CD4-positive, alpha-beta memory T cell (primary cell): ENCODE measurements at regions of chr2 and their contacts with region 1.

Region 1: DNA sequence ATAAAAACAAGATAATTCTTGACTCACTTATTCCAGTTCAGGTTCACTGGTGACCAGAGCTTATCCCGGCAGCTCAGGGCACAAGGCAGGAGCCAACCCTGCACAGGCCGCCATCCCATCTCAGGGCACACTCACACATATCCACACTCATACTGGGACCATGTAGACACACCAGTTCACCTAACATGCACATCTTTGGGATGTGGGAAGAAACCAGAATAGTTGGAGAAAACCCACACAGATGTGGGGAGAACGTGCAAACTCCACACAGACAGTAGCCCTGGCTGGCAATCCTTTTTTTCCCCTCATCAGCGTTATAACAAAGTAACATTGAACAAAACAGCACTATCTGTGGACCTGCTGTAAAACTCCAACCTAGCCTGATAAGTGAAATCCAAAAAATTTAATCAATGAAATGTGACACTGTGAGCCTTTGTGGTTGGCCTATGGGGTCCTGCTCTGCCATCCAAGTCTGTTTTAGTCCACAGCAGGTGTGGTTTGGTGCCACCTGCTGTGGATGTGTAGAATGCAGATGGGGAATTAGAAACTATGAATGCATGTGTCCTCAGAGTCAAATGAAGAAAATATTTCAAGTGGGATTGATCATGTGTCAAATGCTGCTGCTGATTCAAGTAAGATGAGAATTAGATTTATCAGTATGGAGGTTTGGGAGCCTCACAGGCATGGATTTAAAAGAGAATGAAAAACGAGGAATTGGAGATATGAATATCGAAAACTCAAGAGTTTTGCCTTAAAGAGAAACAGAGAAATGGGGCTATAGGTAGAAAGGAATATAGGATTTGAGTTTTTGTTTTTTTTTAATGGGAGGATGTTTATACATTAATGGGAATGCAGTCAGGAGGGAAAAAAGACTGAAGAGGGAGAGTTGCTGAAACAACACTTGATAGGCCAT is 47.0 kb downstream of the UGP2 start:
- DNase-seq: peak in 4 of 5 donors; percentile 27 to 40 (median 33)
- H3K4me3 ChIP-seq: no peak overlapping the region
- H3K4me3 Mint-ChIP-seq: no peak overlapping the region
- H3K27ac ChIP-seq: no peak overlapping the region
- H3K27ac Mint-ChIP-seq: peak overlapping the region in 6 of 7 donors; percentile 5 to 82 (median 41)
- H3K4me1 ChIP-seq: no peaks in the 10 kb centered on the region
- H3K4me1 Mint-ChIP-seq: peaks cover 0 to 10% (median 1%) of the 10 kb centered on the region in 4 donors
- H3K27me3 ChIP-seq: no peaks in the 10 kb centered on the region
- H3K27me3 Mint-ChIP-seq: no peaks in the 10 kb centered on the region

Region 2: GRCh38 chr2:63596401-63596883 is 292.3 kb before region 1 on chr2:
- CTCF ChIA-PET with region 1: no interaction called
- POLR2A ChIA-PET with region 1: no interaction called
- intact Hi-C with region 1: no loop called
- DNase-seq: no peak
- H3K4me3 ChIP-seq: no peak overlapping the region
- H3K4me3 Mint-ChIP-seq: no peak overlapping the region
- H3K27ac ChIP-seq: no peak overlapping the region
- H3K27ac Mint-ChIP-seq: peak overlapping the region in 1 of 7 donors; percentile 42
- H3K4me1 ChIP-seq: peaks cover 2% of the 10 kb centered on the region
- H3K4me1 Mint-ChIP-seq: peaks cover 10 to 24% (median 18%) of the 10 kb centered on the region in 4 donors
- H3K27me3 ChIP-seq: no peaks in the 10 kb centered on the region
- H3K27me3 Mint-ChIP-seq: no peaks in the 10 kb centered on the region

Region 3: DNA sequence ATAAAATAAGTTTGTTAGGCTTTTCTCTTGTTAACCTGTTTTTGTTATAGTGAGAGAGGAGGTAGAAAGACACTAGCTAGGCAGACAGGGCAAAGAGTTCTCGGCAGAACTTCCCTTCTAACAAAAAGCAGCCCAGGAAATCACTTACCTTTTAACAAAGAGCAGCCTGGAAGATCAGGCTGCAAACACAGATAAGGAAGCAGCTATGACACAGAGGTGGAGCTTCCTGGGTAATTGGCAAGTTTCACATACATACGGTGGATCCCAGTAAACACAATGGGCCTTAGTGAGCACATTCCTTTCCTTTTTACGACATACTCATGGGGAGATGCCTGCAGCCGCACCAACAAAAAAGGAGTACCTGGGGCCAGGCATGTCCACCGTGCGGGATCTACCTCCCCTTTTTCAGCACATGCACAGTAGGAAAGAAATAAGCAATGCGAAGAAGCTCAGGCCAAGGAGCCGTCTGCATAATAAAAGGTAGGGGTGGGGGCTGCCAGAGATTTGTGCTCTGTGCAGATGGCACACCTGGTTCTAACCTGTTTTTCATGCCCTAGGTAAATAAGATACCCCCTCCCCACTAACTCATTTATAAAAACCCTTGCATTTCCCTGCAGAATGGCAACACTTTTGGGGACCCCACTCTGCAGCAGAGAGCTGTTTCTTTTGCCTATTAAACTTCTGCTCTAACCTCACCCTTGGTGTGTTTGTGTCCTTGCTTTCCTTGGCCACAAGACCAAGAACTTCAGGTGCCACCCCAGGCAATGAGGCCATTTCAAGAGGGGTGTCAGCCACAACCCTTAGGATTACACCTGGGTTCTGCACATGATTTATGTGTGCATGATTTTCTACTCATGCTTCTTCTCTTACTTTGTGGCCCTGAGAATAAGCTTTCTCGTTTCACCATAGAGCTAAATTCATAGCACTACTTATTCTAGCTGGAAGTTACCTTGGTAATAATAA is 273.5 kb before region 1 on chr2:
- CTCF ChIA-PET with region 1: no interaction called
- POLR2A ChIA-PET with region 1: no interaction called
- intact Hi-C with region 1: no loop called
- DNase-seq: no peak
- H3K4me3 ChIP-seq: no peak overlapping the region
- H3K4me3 Mint-ChIP-seq: no peak overlapping the region
- H3K27ac ChIP-seq: no peak overlapping the region
- H3K27ac Mint-ChIP-seq: no peak overlapping the region
- H3K4me1 ChIP-seq: no peaks in the 10 kb centered on the region
- H3K4me1 Mint-ChIP-seq: no peaks in the 10 kb centered on the region
- H3K27me3 ChIP-seq: no peaks in the 10 kb centered on the region
- H3K27me3 Mint-ChIP-seq: peaks cover 6 to 10% of the 10 kb centered on the region in 2 donors

Region 4: DNA sequence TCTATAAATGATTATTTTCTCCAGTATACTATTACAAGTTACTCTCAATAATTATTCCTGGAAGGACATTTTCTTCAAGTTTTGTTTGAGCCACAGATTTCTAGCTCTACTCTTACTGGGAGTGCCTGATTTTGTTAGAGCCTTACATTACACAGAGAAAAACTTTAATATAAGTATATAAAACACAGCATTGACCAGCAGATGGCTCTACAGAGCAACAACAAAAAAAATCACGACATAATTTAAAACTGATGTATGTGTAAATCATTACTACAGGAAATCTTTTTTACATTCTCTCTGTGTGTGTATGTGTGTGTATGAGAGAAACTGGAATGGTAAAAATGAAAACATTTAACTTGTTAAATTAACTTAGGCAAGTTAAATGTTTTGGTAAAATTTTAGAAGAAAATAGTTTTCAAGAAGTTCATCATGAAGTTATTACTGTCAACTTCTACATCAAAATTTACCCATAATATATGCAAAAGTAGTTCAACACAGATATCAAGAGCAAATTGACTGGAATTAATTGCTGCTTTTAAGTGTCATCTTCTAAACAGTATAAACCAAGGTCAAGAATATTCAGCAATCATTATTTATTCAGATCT is 196.6 kb before region 1 on chr2:
- CTCF ChIA-PET with region 1: interaction called, 4 read pairs
- POLR2A ChIA-PET with region 1: no interaction called
- intact Hi-C with region 1: loop called (anchors 1 kb)
- DNase-seq: peak in 4 of 5 donors; percentile 38 to 54 (median 46)
- H3K4me3 ChIP-seq: no peak overlapping the region
- H3K4me3 Mint-ChIP-seq: no peak overlapping the region
- H3K27ac ChIP-seq: no peak overlapping the region
- H3K27ac Mint-ChIP-seq: no peak overlapping the region
- H3K4me1 ChIP-seq: no peaks in the 10 kb centered on the region
- H3K4me1 Mint-ChIP-seq: peaks cover 0 to 1% (median 0%) of the 10 kb centered on the region in 4 donors
- H3K27me3 ChIP-seq: no peaks in the 10 kb centered on the region
- H3K27me3 Mint-ChIP-seq: no peaks in the 10 kb centered on the region

Region 5: DNA sequence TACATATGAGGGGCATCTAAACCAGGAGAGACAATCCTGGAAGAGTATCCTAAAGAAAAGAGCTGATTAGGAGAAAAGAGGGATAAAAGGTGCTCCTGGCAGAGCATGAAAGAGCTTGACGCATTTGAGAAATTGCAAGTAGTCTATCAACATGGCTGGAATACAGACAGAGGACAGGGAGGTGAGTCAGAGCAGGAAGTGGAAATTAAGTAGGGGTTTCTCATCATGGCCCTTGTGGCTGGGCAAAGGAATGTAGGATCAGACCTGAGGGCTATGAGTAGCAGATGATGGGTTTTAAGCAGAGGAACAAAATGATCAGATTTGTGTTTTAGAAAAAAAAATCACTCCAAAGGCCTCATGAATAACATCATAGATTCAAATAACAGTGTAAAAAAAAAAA is 96.2 kb before region 1 on chr2:
- CTCF ChIA-PET with region 1: no interaction called
- POLR2A ChIA-PET with region 1: no interaction called
- intact Hi-C with region 1: no loop called
- DNase-seq: no peak
- H3K4me3 ChIP-seq: no peak overlapping the region
- H3K4me3 Mint-ChIP-seq: no peak overlapping the region
- H3K27ac ChIP-seq: no peak overlapping the region
- H3K27ac Mint-ChIP-seq: no peak overlapping the region
- H3K4me1 ChIP-seq: no peaks in the 10 kb centered on the region
- H3K4me1 Mint-ChIP-seq: no peaks in the 10 kb centered on the region
- H3K27me3 ChIP-seq: no peaks in the 10 kb centered on the region
- H3K27me3 Mint-ChIP-seq: no peaks in the 10 kb centered on the region

Region 6: DNA sequence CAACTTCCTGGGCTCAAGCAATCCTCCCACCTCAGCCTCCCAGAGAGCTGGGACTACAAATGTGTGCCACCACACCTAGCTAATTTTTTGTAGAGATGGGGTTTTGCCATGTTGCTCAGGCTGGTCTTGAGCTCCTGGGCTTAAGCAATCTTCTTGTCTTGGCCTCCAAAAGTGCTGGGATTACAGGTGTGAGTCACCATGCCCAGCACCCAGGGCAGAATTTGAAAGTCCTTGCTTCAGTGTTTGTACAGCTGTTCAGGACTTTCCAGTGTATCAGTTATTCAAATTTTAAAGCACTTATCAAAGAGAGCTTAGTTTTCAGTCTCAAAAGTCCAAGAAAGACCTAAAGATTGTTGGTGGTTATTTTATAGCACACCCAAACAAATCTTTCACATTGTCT is 174.1 kb after region 1 on chr2:
- CTCF ChIA-PET with region 1: no interaction called
- POLR2A ChIA-PET with region 1: no interaction called
- intact Hi-C with region 1: no loop called
- DNase-seq: no peak
- H3K4me3 ChIP-seq: no peak overlapping the region
- H3K4me3 Mint-ChIP-seq: no peak overlapping the region
- H3K27ac ChIP-seq: no peak overlapping the region
- H3K27ac Mint-ChIP-seq: peak overlapping the region in 6 of 7 donors; percentile 1 to 88 (median 64)
- H3K4me1 ChIP-seq: peaks cover 19% of the 10 kb centered on the region
- H3K4me1 Mint-ChIP-seq: peaks cover 14 to 30% (median 19%) of the 10 kb centered on the region in 4 donors
- H3K27me3 ChIP-seq: no peaks in the 10 kb centered on the region
- H3K27me3 Mint-ChIP-seq: no peaks in the 10 kb centered on the region